GM12878 (cell line): ENCODE measurements at regions of chr6 and their contacts with region 1.

Region 1: GRCh38 chr6:105431226-105431625 is 28.3 kb upstream of the PREP start:
- DNase-seq: no peak
- ATAC-seq: peak; percentile 65
- H3K4me3 ChIP-seq: no peak overlapping the region
- H3K27ac ChIP-seq: no peak overlapping the region
- H3K4me1 ChIP-seq: peaks cover 3% of the 10 kb centered on the region
- H3K27me3 ChIP-seq: no peaks in the 10 kb centered on the region
- CTCF ChIP-seq: peak; percentile 47 to 58 (median 57); a peak in 5 of 6 replicates
- EP300 ChIP-seq: no peak
- POLR2A ChIP-seq: no peak
- RAD21 ChIP-seq: peak; percentile 81

Region 2: DNA sequence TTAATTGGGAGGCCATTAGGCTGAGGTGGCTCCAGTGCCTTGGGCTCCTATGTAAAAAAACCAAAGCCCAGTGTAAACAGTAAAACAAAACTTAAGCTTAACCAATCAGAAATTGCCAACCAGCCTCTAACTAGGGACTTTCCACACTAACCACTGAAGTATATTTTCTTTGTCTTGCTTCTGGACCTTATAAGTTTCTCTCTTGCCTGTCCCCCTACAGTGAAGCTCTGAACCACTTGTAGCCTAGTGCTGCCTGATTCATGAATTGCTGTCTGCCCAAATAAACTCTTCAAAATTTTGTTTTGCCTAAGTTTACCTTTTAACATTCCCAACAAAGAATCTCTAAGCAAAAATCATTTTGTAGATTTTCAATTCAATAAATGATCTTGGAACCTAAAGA is 279.6 kb before region 1 on chr6:
- CTCF ChIA-PET with region 1: no interaction called
- POLR2A ChIA-PET with region 1: no interaction called
- RAD21 ChIA-PET with region 1: no interaction called
- SMC1A ChIA-PET with region 1: no interaction called
- in situ Hi-C with region 1: no loop called
- intact Hi-C with region 1: no loop called
- DNase-seq: peak; percentile 36
- ATAC-seq: peak; percentile 65
- H3K4me3 ChIP-seq: no peak overlapping the region
- H3K27ac ChIP-seq: no peak overlapping the region
- H3K4me1 ChIP-seq: no peaks in the 10 kb centered on the region; the same call in 1 of the 2 replicates
- H3K27me3 ChIP-seq: no peaks in the 10 kb centered on the region
- CTCF ChIP-seq: no peak
- EP300 ChIP-seq: no peak
- POLR2A ChIP-seq: no peak
- RAD21 ChIP-seq: no peak

Region 3: GRCh38 chr6:105445481-105445880 is 14.3 kb after region 1 on chr6:
- CTCF ChIA-PET with region 1: interaction called, 19 read pairs
- POLR2A ChIA-PET with region 1: interaction called, 3 read pairs
- RAD21 ChIA-PET with region 1: interaction called, 15 read pairs
- SMC1A ChIA-PET with region 1: interaction called, 37 read pairs
- in situ Hi-C with region 1: no loop called
- intact Hi-C with region 1: no loop called
- DNase-seq: no peak
- ATAC-seq: no peak
- H3K4me3 ChIP-seq: no peak overlapping the region
- H3K27ac ChIP-seq: no peak overlapping the region
- H3K4me1 ChIP-seq: no peaks in the 10 kb centered on the region
- H3K27me3 ChIP-seq: no peaks in the 10 kb centered on the region
- CTCF ChIP-seq: no peak
- EP300 ChIP-seq: no peak
- POLR2A ChIP-seq: no peak
- RAD21 ChIP-seq: no peak

Region 4: DNA sequence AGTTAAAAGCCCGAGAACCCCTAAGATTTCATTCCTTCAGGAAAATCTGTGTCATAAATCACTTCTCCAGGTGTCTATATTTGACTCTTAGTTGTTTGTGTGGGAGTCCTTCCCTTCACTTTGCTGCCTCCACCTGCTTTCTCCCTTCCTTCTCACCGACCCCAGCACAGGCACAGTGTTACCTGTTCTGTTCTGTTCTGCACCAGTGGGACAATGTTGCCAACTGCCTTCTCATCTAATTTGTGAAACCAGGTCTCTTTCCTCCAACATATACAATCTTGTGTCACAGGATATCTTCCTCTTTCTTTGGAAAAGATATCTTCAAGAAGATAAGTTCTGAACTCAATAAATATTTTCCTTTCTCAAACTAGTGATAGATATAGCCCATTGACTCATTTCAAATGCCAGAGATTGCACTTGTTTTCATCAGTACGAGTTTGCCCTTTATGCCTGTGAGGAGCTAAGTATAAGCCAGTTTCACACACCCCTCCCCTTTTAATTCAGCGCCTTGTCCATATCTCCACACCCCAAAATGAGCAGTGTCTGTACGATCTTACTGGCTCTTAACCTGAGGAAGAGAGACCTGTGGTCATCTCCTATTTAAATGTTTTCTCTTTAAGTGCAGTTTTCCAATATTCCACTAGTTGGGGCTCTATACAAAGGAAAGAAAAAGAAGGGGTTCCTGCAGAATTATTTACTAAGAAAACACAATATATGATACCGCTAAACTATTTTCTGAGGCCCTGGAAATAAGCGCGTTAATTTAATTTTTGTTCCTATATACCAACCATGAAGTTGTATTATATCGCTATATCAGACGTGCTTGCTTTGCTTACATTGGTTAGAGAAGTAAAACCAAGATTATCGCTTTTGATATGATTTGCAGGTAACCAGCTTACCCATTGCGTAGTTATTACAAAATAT is 53.3 kb after region 1 on chr6:
- CTCF ChIA-PET with region 1: interaction called, 112 read pairs
- POLR2A ChIA-PET with region 1: interaction called, 5 read pairs
- RAD21 ChIA-PET with region 1: interaction called, 86 read pairs
- SMC1A ChIA-PET with region 1: interaction called, 100 read pairs
- in situ Hi-C with region 1: no loop called
- intact Hi-C with region 1: loop called (anchors 1 kb)
- DNase-seq: no peak
- ATAC-seq: peak; percentile 64
- H3K4me3 ChIP-seq: no peak overlapping the region
- H3K27ac ChIP-seq: peak overlapping the region; percentile 8; the same call in 1 of the 2 replicates
- H3K4me1 ChIP-seq: peaks cover 50% of the 10 kb centered on the region
- H3K27me3 ChIP-seq: no peaks in the 10 kb centered on the region
- CTCF ChIP-seq: peak; percentile 80 to 84 (median 82)
- EP300 ChIP-seq: peak in 1 of 2 experiments; percentile 50; a peak in 2 of 4 replicates
- POLR2A ChIP-seq: no peak
- RAD21 ChIP-seq: peak; percentile 96

Region 5: DNA sequence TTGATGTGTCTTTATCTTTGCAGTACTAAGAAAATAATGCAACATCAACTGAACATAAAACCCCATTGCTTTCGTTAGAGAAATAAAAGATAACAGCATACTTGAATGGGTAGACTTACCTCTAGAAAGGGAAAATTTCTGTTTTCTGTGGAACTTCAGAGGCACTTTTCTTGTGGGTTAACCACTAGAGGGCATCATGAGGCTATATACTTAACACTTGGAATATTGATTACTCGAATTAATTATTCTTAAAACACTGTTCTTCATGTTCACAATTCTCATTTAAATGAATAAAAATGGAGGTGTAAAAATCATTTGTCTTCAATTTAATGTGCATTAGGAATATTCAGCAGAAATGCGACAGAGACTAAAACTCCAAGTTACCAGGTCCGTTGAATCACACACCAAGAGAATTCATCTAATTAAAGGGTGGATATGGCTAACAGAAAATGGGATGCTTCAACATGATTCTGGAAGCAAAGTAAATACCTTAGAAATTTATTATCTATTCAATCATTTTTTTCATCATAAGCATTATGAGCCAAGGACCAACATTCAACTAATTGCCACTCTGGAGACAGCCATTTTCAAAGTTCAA is 302.4 kb after region 1 on chr6:
- CTCF ChIA-PET with region 1: interaction called, 38 read pairs
- POLR2A ChIA-PET with region 1: no interaction called
- RAD21 ChIA-PET with region 1: interaction called, 26 read pairs
- SMC1A ChIA-PET with region 1: interaction called, 9 read pairs
- in situ Hi-C with region 1: no loop called
- intact Hi-C with region 1: loop called (anchors 2 kb)
- DNase-seq: no peak
- ATAC-seq: peak; percentile 41; the same call in 1 of the 3 replicates
- H3K4me3 ChIP-seq: no peak overlapping the region
- H3K27ac ChIP-seq: no peak overlapping the region
- H3K4me1 ChIP-seq: no peaks in the 10 kb centered on the region
- H3K27me3 ChIP-seq: no peaks in the 10 kb centered on the region
- CTCF ChIP-seq: peak; percentile 48 to 52 (median 50); a peak in 5 of 6 replicates
- EP300 ChIP-seq: no peak
- POLR2A ChIP-seq: no peak
- RAD21 ChIP-seq: peak; percentile 56

Region 6: GRCh38 chr6:106085984-106086813 is 655.0 kb after region 1 on chr6 and contains the start of gene PRDM1:
- CTCF ChIA-PET with region 1: interaction called, 44 read pairs
- POLR2A ChIA-PET with region 1: no interaction called
- RAD21 ChIA-PET with region 1: interaction called, 37 read pairs
- SMC1A ChIA-PET with region 1: interaction called, 27 read pairs
- in situ Hi-C with region 1: loop called (anchors 10 kb)
- intact Hi-C with region 1: loop called (anchors 2 kb)
- DNase-seq: peak; percentile 78
- ATAC-seq: peak; percentile 77
- H3K4me3 ChIP-seq: peak within 1 kb of the TSS; percentile 70
- H3K27ac ChIP-seq: peak within 1 kb of the TSS; percentile 78
- H3K4me1 ChIP-seq: peaks cover 23% of the 10 kb centered on the region
- H3K27me3 ChIP-seq: peaks cover 0 to under 1% of the 10 kb centered on the region in 2 experiments; a peak in 2 of 4 replicates
- CTCF ChIP-seq: peak; percentile 35 to 41 (median 41); a peak in 4 of 6 replicates
- EP300 ChIP-seq: no peak
- POLR2A ChIP-seq: peak; percentile 82
- RAD21 ChIP-seq: peak; percentile 38
- polyA plus RNA-seq, gene PRDM1: 1.9 to 2.8 TPM

Region 7: DNA sequence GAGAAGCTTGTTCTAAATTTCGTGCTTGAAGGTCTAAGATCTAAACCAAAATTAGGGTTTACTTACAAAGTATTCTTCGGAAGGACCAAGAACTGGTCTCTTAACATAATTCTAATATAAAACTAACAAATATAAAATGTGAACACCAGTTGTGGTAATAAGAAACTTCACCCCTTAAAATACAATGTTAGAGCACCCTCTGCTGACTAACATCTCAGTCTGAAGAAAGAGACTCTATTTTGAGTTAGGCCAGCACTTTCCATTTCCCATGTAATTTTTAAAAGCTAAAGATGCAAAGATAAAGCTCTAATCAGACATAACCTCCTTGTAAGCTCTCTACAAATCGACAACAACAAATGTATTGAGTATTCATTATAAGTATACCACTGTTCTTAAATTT is 869.7 kb after region 1 on chr6:
- CTCF ChIA-PET with region 1: interaction called, 46 read pairs
- POLR2A ChIA-PET with region 1: no interaction called
- RAD21 ChIA-PET with region 1: interaction called, 9 read pairs
- SMC1A ChIA-PET with region 1: interaction called, 31 read pairs
- in situ Hi-C with region 1: no loop called
- intact Hi-C with region 1: loop called (anchors 5 kb)
- DNase-seq: peak; percentile 12
- ATAC-seq: peak; percentile 61
- H3K4me3 ChIP-seq: no peak overlapping the region
- H3K27ac ChIP-seq: no peak overlapping the region
- H3K4me1 ChIP-seq: no peaks in the 10 kb centered on the region
- H3K27me3 ChIP-seq: no peaks in the 10 kb centered on the region
- CTCF ChIP-seq: peak; percentile 23 to 56 (median 41); a peak in 4 of 6 replicates
- EP300 ChIP-seq: no peak
- POLR2A ChIP-seq: no peak
- RAD21 ChIP-seq: peak; percentile 68